HepG2 (cell line): ENCODE measurements at regions of chr3 and their contacts with region 1.

Region 1: DNA sequence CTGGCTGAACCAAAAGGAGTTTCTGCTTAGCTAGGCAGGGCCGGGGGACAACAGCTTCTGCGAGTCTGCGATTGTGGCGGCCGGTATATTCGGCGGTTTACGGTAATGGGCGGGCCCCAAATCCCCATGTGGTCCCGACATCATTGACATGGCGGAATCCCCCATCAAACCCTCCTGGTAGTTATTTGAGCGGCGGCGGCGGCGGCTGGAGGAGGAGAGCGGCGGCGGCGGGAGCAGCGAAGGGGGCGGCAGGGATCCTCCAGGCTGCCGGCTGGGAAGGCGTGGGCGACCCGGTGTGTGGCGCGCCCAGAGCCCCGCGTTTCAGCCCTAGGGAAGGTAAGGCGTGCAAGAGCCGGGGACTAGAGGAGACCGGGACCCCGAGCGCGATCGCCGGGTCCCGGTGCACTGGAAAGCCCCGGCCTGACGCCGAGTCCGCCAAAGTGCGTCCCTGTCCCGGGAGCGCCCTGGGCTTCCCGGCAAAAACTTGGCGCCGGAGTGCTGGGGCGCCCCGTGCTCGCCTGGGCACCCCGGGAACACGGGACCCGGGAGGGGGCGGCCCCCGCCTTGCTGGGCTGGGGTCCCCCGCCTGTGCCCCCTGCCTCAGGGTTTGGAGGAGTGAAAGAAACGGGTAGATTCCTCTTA is at the start of gene FNDC3B:
- DNase-seq: peak; percentile 89
- ATAC-seq: peak; percentile 80
- H3K4me3 ChIP-seq: peak within 1 kb of the TSS; percentile 93 to 99 (median 95)
- H3K27ac ChIP-seq: peak within 1 kb of the TSS; percentile 99
- H3K4me1 ChIP-seq: peaks cover 50% of the 10 kb centered on the region
- H3K27me3 ChIP-seq: no peaks in the 10 kb centered on the region; a peak in 1 of 5 replicates
- CTCF ChIP-seq: no peak
- EP300 ChIP-seq: peak in 1 of 2 experiments; percentile 61; a peak in 2 of 4 replicates
- POLR2A ChIP-seq: peak in 1 of 2 experiments; percentile 76; a peak in 3 of 4 replicates
- RAD21 ChIP-seq: peak; percentile 37; the same call in 1 of the 2 replicates
- total RNA-seq, gene FNDC3B: 103 and 110 TPM in 2 replicates

Region 2: DNA sequence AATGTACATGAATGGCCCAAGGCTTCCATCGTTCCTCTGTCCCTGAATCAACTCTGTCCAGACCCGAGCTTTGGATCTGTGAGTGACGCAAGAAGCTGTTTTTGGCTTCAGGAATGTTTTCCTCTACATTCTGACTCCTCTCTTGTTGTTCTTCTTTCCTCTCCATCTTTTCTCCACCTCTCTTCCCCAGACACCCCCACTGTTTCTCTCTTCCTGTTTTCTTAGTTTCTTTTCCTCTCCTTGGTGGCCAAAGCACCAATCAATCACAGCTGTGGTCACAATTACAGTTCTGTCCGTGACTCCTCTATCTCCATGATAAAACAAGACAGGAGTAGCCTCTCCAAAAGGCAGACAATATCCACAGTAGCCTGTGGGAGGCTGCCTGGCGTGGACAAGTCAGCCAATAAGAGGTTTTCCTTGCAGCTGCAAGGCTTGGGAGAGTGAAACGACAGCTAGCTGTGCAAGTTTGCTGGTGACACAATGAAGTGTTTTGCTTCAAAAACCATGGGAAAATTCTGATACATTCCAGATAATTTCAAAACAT is 201.3 kb before region 1 on chr3:
- CTCF ChIA-PET with region 1: no interaction called
- POLR2A ChIA-PET with region 1: interaction called, 66 read pairs
- in situ Hi-C with region 1: loop called (anchors 10 kb)
- intact Hi-C with region 1: loop called (anchors 2 kb)
- DNase-seq: peak; percentile 90
- ATAC-seq: peak; percentile 64
- H3K4me3 ChIP-seq: peak overlapping the region in 1 of 3 experiments; percentile 19; a peak in 1 of 6 replicates
- H3K27ac ChIP-seq: peak overlapping the region; percentile 100
- H3K4me1 ChIP-seq: peaks cover 97% of the 10 kb centered on the region
- H3K27me3 ChIP-seq: no peaks in the 10 kb centered on the region
- CTCF ChIP-seq: 0 out of 2 replicates have a peak, but pooled peaks have one; percentile 13
- EP300 ChIP-seq: peak; percentile 17 to 79; a peak in 2 of 4 replicates
- POLR2A ChIP-seq: 0 out of 4 replicates have a peak, but pooled peaks of 1 of the 2 experiments have one; percentile 33
- RAD21 ChIP-seq: no peak

Region 3: GRCh38 chr3:171936191-171936841 is 103.2 kb before region 1 on chr3:
- CTCF ChIA-PET with region 1: no interaction called
- POLR2A ChIA-PET with region 1: interaction called, 4 read pairs
- in situ Hi-C with region 1: no loop called
- intact Hi-C with region 1: loop called (anchors 5 kb)
- DNase-seq: no peak
- ATAC-seq: no peak
- H3K4me3 ChIP-seq: no peak overlapping the region
- H3K27ac ChIP-seq: no peak overlapping the region
- H3K4me1 ChIP-seq: peaks cover 47% of the 10 kb centered on the region
- H3K27me3 ChIP-seq: no peaks in the 10 kb centered on the region
- CTCF ChIP-seq: no peak
- EP300 ChIP-seq: no peak
- POLR2A ChIP-seq: no peak
- RAD21 ChIP-seq: no peak

Region 4: GRCh38 chr3:172082269-172082668 is 42.7 kb after region 1 on chr3:
- CTCF ChIA-PET with region 1: no interaction called
- POLR2A ChIA-PET with region 1: interaction called, 3 read pairs
- in situ Hi-C with region 1: no loop called
- intact Hi-C with region 1: loop called (anchors 5 kb)
- DNase-seq: peak; percentile 49
- ATAC-seq: peak; percentile 7; the same call in 1 of the 3 replicates
- H3K4me3 ChIP-seq: no peak overlapping the region; a peak in 1 of 6 replicates
- H3K27ac ChIP-seq: peak overlapping the region; percentile 66
- H3K4me1 ChIP-seq: peaks cover 100% of the 10 kb centered on the region
- H3K27me3 ChIP-seq: no peaks in the 10 kb centered on the region
- CTCF ChIP-seq: no peak
- EP300 ChIP-seq: no peak
- POLR2A ChIP-seq: no peak
- RAD21 ChIP-seq: no peak

Region 5: DNA sequence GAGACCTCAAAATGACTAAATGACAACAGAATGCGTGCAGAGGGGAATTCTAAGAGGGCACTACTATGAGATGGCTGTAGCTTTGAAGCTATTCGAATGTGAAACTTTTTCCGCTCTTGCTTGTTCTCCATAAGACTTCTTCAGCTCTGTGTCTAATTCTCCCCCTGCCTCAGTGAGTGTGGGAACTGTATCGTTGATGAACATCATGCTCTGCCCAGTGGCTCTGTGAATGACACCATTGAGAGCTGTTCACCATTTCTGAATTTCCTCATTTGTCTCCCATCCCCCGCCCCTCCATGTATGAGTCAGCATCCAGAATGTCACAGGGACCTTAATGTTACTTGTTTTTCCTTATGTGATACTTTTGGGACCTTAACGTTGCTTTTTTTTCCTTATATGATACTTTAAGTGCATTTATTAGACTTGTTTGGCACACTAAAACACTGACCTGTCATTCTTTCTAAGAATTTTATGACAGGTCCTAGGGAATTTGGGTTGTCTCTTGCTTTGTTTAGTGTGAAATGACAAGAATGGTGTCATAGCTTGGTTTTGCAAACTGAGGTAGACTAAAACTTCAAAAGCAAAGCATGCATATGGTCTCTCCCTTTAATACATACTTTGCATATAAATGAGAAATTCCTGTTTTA is 99.4 kb after region 1 on chr3:
- CTCF ChIA-PET with region 1: no interaction called
- POLR2A ChIA-PET with region 1: interaction called, 23 read pairs
- in situ Hi-C with region 1: no loop called
- intact Hi-C with region 1: no loop called
- DNase-seq: peak; percentile 70
- ATAC-seq: no peak
- H3K4me3 ChIP-seq: no peak overlapping the region; a peak in 1 of 6 replicates
- H3K27ac ChIP-seq: peak overlapping the region; percentile 89
- H3K4me1 ChIP-seq: peaks cover 94% of the 10 kb centered on the region
- H3K27me3 ChIP-seq: no peaks in the 10 kb centered on the region
- CTCF ChIP-seq: no peak
- EP300 ChIP-seq: peak in 1 of 2 experiments; percentile 51; a peak in 2 of 4 replicates
- POLR2A ChIP-seq: peak; percentile 28 to 38; a peak in 2 of 4 replicates
- RAD21 ChIP-seq: no peak